ENCODE measurements at regions of chr1 and their contacts with region 1.

Region 1: DNA sequence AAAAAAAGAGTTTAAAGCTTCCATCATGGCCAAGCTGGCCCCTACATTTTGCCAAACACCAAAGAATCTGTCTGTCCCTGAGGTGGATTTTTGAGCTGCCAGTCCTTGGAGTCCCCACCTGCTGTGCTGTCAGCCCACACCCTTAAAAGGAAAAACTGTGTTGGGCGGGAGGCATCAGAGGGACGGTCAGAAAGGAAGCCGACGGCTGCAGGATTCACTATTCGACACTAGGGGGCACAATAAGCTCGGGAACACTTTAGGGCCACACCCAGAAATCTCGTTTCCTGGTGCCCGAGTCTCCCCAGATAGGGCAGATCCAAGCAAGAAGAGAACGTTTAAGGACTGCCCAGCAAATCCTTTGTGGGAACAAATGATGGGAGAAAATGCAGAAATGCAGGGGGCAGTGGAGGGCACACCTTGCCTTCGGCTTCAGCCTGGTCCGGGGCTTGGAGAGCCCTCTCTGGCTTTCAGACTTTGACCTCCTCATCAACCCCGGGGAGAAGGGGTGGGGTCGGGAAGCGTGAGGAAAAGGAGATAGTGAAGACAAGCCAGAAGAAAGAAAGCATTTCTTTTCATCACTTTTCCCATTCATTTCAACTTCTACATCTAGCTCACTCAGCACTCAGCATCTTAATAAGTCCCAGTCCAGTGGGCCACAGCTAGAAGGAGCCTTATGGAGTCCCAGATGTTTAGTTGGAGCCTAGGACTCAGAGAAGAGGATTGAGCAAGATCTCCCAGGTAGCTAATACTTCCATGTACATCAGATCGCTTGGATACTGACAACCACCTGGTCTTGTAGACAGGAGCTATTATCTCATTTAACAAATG is 5.0 kb upstream of the CTTNBP2NL start:
- DNase-seq: peak; percentile 87
- ATAC-seq: peak; percentile 92 to 94
- H3K4me3 ChIP-seq: peak overlapping the region; percentile 56
- H3K27ac ChIP-seq: peak overlapping the region; percentile 81
- H3K4me1 ChIP-seq: peaks cover 49% of the 10 kb centered on the region
- H3K27me3 ChIP-seq: no peaks in the 10 kb centered on the region
- CTCF ChIP-seq: peak; percentile 94

Region 2: GRCh38 chr1:112285746-112286145 is 105.2 kb before region 1 on chr1:
- intact Hi-C with region 1: no loop called
- DNase-seq: no peak
- ATAC-seq: no peak
- H3K4me3 ChIP-seq: no peak overlapping the region
- H3K27ac ChIP-seq: no peak overlapping the region
- H3K4me1 ChIP-seq: no peaks in the 10 kb centered on the region
- H3K27me3 ChIP-seq: no peaks in the 10 kb centered on the region
- CTCF ChIP-seq: no peak

Region 3: DNA sequence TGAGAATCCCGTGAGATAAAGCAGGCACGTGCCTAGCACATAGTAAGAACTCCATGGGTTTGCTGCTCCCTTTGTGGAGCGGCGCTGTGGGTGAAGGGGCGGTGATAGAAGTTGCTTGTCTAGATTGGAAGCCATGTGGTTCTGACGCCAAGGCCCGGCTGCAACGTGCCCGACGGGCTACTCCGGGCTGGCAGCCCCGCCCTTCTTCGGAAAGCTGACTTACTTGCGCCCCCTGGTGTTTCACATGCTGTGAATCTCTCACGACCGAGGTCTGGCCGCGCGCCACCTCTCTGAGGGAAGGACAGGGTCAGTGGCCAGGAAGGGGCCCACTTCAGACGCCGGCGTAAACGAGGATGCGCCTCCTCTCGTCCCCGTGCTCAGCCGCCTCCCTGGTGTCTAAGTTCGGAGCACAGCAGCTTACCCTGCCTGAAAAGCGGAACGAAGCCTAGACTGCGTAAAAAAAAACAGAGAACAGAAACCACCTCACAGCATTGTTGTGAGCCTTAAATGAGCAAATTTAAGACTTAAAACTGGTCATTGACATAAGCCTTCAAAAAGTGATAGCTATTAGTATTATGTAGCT is 75.2 kb after region 1 on chr1:
- intact Hi-C with region 1: loop called (anchors 5 kb)
- DNase-seq: peak; percentile 96
- ATAC-seq: peak; percentile 88 to 95
- H3K4me3 ChIP-seq: peak overlapping the region; percentile 49
- H3K27ac ChIP-seq: peak overlapping the region; percentile 70
- H3K4me1 ChIP-seq: peaks cover 31% of the 10 kb centered on the region
- H3K27me3 ChIP-seq: no peaks in the 10 kb centered on the region
- CTCF ChIP-seq: peak; percentile 87